CD4-positive, alpha-beta memory T cell (primary cell): ENCODE measurements at regions of chr7 and their contacts with region 1.

Region 1: GRCh38 chr7:21427182-21427870 is 557 bp upstream of the SP4 start:
- DNase-seq: peak; percentile 99 to 100 (median 100)
- H3K4me3 ChIP-seq: peak overlapping the region; percentile 93
- H3K4me3 Mint-ChIP-seq: peak overlapping the region; percentile 95 to 100 (median 99)
- H3K27ac ChIP-seq: peak overlapping the region; percentile 93
- H3K27ac Mint-ChIP-seq: peak overlapping the region; percentile 98 to 100 (median 99)
- H3K4me1 ChIP-seq: peaks cover 49% of the 10 kb centered on the region
- H3K4me1 Mint-ChIP-seq: peaks cover 30 to 56% (median 43%) of the 10 kb centered on the region in 4 donors
- H3K27me3 ChIP-seq: no peaks in the 10 kb centered on the region
- H3K27me3 Mint-ChIP-seq: no peaks in the 10 kb centered on the region

Region 2: DNA sequence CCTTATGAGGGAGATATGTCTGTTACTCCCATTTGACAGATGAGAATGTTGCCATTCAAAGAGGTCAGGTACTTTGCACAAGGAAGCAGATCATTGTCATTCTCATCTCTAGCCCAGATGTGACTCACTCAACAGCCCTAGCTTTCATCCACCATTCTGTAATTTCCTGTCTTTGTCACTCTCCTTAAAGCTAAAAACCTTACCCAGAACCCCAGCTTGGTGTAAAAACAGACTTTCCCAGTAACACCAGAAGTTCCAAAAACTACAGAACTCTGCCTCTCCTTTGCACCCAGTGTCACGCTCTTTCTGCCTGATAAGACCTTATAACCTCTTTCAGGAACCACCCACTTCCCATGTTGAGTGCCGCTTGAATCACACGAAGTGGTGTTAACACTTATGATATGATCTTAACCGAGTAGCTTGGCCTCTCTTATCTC is 88.6 kb before region 1 on chr7:
- CTCF ChIA-PET with region 1: interaction called, 5 read pairs
- POLR2A ChIA-PET with region 1: interaction called, 23 read pairs
- intact Hi-C with region 1: loop called (anchors 5 kb)
- DNase-seq: peak; percentile 24 to 69 (median 47)
- H3K4me3 ChIP-seq: peak overlapping the region in 1 of 2 donors; percentile 30
- H3K4me3 Mint-ChIP-seq: peak overlapping the region; percentile 8 to 79 (median 66)
- H3K27ac ChIP-seq: peak overlapping the region; percentile 34
- H3K27ac Mint-ChIP-seq: peak overlapping the region; percentile 67 to 93 (median 91)
- H3K4me1 ChIP-seq: peaks cover 19% of the 10 kb centered on the region
- H3K4me1 Mint-ChIP-seq: peaks cover 20 to 51% (median 25%) of the 10 kb centered on the region in 4 donors
- H3K27me3 ChIP-seq: no peaks in the 10 kb centered on the region
- H3K27me3 Mint-ChIP-seq: no peaks in the 10 kb centered on the region

Region 3: DNA sequence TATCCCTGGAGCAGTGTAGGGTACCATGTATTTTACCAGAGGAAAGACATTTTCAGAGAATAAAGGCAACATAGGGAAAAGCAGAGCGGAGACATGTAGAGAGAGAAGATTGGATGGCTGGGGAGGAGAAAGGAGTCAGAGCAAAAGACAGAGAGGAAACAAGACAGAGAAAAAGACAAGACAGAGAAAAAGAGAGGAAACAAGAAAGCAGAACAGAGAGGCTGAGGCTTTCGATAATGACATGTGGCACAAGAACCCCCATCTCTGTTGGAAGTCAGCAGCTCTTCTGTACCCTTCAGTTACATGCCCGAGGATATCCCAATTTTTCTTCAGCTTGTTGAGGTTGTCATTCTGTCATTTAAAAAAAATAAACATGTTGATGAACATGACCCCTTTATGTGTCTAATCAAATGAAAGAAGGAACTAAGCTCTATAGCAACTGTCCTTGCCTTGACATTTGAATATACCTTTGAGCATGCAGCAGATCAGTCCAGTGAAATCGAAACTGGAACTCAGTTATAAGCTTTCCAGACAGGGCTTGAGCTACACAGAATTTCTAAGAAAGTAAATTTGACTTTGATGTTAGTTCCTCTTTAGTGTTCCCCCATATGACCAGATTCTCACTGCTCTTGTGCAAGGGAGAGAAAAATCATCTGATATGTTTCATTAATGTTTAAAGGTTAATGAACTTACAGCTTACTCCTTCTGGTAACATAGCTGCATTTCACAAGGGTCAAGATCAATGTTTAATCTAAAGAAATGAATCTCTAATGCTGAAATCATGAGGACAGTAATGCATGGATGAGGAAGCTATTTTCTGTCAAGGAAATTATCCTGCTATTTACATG is 74.6 kb before region 1 on chr7:
- CTCF ChIA-PET with region 1: interaction called, 8 read pairs
- POLR2A ChIA-PET with region 1: interaction called, 37 read pairs
- intact Hi-C with region 1: loop called (anchors 1 kb)
- DNase-seq: peak in 4 of 5 donors; percentile 46 to 61 (median 50)
- H3K4me3 ChIP-seq: peak overlapping the region in 1 of 2 donors; percentile 26
- H3K4me3 Mint-ChIP-seq: peak overlapping the region; percentile 47 to 91 (median 76)
- H3K27ac ChIP-seq: peak overlapping the region; percentile 34
- H3K27ac Mint-ChIP-seq: peak overlapping the region; percentile 62 to 97 (median 93)
- H3K4me1 ChIP-seq: peaks cover 60% of the 10 kb centered on the region
- H3K4me1 Mint-ChIP-seq: peaks cover 49 to 59% (median 55%) of the 10 kb centered on the region in 4 donors
- H3K27me3 ChIP-seq: no peaks in the 10 kb centered on the region
- H3K27me3 Mint-ChIP-seq: no peaks in the 10 kb centered on the region

Region 4: GRCh38 chr7:21412410-21412851 is 14.9 kb before region 1 on chr7:
- CTCF ChIA-PET with region 1: interaction called, 9 read pairs
- POLR2A ChIA-PET with region 1: interaction called, 24 read pairs
- intact Hi-C with region 1: no loop called
- DNase-seq: peak in 4 of 5 donors; percentile 21 to 30 (median 26)
- H3K4me3 ChIP-seq: no peak overlapping the region
- H3K4me3 Mint-ChIP-seq: peak overlapping the region in 7 of 8 donors; percentile 4 to 63 (median 51)
- H3K27ac ChIP-seq: no peak overlapping the region
- H3K27ac Mint-ChIP-seq: peak overlapping the region; percentile 48 to 87 (median 66)
- H3K4me1 ChIP-seq: peaks cover 31% of the 10 kb centered on the region
- H3K4me1 Mint-ChIP-seq: peaks cover 30 to 46% (median 37%) of the 10 kb centered on the region in 4 donors
- H3K27me3 ChIP-seq: no peaks in the 10 kb centered on the region
- H3K27me3 Mint-ChIP-seq: peaks cover 0 to 4% of the 10 kb centered on the region in 2 donors

Region 5: DNA sequence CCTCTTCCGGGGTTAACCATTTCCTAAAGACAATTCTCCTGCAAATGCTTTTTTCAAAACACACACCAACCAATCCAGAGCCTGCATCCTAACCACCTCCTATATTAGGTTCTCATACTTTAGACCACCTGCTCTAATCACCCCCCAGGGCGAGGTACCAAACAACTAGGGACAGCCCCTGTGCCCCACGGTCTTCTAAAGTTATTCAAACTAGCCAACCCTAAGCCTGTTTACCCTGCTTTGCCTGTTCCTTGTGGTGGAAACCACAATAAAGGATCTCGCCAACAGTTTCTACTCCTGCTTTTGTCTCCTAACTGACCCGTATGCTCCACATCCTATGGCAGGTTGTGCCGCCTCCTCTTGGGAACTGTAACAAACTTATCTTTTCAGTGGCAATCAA is 21.6 kb after region 1 on chr7:
- CTCF ChIA-PET with region 1: interaction called, 3 read pairs
- POLR2A ChIA-PET with region 1: interaction called, 3 read pairs
- intact Hi-C with region 1: loop called (anchors 2 kb)
- DNase-seq: no peak
- H3K4me3 ChIP-seq: no peak overlapping the region
- H3K4me3 Mint-ChIP-seq: peak overlapping the region in 3 of 8 donors; percentile 25 to 79 (median 46)
- H3K27ac ChIP-seq: no peak overlapping the region
- H3K27ac Mint-ChIP-seq: peak overlapping the region in 4 of 7 donors; percentile 22 to 87 (median 74)
- H3K4me1 ChIP-seq: peaks cover 25% of the 10 kb centered on the region
- H3K4me1 Mint-ChIP-seq: peaks cover 35 to 68% (median 53%) of the 10 kb centered on the region in 4 donors
- H3K27me3 ChIP-seq: no peaks in the 10 kb centered on the region
- H3K27me3 Mint-ChIP-seq: no peaks in the 10 kb centered on the region